ENCODE measurements at regions of chr1 and their contacts with region 1.

Region 1: DNA sequence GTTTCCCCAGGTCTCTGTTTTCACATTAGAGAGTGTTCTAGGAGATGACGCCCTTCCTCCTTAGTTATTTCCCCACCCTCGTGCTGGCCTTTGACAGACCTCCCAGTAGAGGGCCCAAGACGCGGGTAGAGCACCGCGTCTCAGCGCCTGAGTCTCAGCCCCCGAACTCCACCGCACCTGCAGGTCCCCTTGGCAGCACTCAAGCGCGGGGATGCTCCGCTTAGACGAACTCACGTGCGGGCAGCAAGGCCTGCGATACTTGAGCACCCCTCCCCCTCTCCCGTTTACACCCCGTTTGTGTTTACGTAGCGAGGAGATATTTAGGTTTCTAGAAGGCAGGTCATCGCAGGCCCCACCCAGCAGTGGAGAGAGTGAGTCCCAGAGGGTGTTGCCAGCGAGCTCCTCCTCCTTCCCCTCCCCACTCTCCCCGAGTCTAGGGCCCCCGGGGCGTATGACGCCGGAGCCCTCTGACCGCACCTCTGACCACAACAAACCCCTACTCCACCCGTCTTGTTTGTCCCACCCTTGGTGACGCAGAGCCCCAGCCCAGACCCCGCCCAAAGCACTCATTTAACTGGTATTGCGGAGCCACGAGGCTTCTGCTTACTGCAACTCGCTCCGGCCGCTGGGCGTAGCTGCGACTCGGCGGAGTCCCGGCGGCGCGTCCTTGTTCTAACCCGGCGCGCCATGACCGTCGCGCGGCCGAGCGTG is at the start of gene CD55:
- DNase-seq: peak; percentile 100
- ATAC-seq: peak; percentile 86
- H3K4me3 ChIP-seq: peak within 1 kb of the TSS; percentile 77
- H3K27ac ChIP-seq: peak within 1 kb of the TSS; percentile 88
- H3K4me1 ChIP-seq: peaks cover 41% of the 10 kb centered on the region
- H3K27me3 ChIP-seq: no peaks in the 10 kb centered on the region
- CTCF ChIP-seq: peak; percentile 72
- total RNA-seq, gene CD55: 101 and 108 TPM in 2 replicates

Region 2: DNA sequence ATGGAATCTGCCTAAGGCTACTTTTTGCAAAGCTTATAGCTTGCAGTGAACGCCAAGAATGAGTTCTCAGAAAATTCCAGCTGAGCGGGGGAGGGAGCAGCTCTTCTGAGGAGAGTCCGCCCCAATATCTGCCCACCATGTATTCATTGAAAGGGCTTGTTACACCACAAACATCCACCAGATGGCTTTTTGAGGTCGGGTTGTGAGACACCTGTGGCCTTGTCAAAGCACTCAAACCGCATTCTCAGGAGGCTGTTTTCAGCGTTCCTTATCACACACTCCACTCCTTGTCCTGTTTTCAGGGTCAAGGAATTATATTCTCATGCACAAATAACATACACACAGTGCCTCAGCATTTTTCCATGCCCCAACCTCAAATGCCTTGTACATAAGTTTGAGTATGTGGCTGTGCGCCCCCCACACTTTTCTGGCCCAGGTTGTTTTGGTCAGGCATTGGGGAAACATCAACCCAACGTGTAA is 236.5 kb before region 1 on chr1:
- CTCF ChIA-PET with region 1: interaction called, 5 read pairs
- POLR2A ChIA-PET with region 1: interaction called, 3 read pairs
- intact Hi-C with region 1: loop called (anchors 2 kb)
- DNase-seq: peak; percentile 95
- ATAC-seq: peak; percentile 89
- H3K4me3 ChIP-seq: no peak overlapping the region
- H3K27ac ChIP-seq: no peak overlapping the region
- H3K4me1 ChIP-seq: peaks cover 13% of the 10 kb centered on the region
- H3K27me3 ChIP-seq: no peaks in the 10 kb centered on the region
- CTCF ChIP-seq: peak; percentile 94

Region 3: DNA sequence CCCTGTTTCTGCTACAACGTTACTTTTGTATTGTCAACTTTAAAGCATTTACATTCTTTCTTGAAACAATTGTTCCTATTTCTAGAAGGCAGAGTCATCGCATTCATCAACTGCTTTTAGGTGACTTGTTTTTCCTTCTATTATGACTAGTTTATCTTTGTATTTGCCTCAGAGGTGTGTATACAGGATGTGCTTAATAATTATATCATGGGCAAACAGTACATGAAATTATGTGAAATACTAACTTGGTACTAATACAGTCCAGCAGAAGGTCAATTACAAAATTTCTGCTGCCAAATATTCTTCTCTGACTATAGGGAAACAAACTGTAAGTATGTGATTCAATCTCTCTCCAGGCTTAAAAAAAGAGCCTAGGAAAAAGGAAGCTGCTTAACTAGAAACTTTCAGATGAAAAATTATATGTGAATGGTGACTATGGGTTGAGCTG is 115.6 kb before region 1 on chr1:
- CTCF ChIA-PET with region 1: no interaction called
- POLR2A ChIA-PET with region 1: interaction called, 5 read pairs
- intact Hi-C with region 1: loop called (anchors 1 kb)
- DNase-seq: peak; percentile 31
- ATAC-seq: peak; percentile 30
- H3K4me3 ChIP-seq: no peak overlapping the region
- H3K27ac ChIP-seq: peak overlapping the region; percentile 74
- H3K4me1 ChIP-seq: peaks cover 14% of the 10 kb centered on the region
- H3K27me3 ChIP-seq: no peaks in the 10 kb centered on the region
- CTCF ChIP-seq: no peak

Region 4: GRCh38 chr1:207282058-207282457 is 39.2 kb before region 1 on chr1:
- CTCF ChIA-PET with region 1: no interaction called
- POLR2A ChIA-PET with region 1: interaction called, 4 read pairs
- intact Hi-C with region 1: loop called (anchors 1 kb)
- DNase-seq: peak; percentile 85
- ATAC-seq: peak; percentile 86
- H3K4me3 ChIP-seq: no peak overlapping the region
- H3K27ac ChIP-seq: peak overlapping the region; percentile 68
- H3K4me1 ChIP-seq: peaks cover 21% of the 10 kb centered on the region
- H3K27me3 ChIP-seq: no peaks in the 10 kb centered on the region
- CTCF ChIP-seq: no peak

Region 5: DNA sequence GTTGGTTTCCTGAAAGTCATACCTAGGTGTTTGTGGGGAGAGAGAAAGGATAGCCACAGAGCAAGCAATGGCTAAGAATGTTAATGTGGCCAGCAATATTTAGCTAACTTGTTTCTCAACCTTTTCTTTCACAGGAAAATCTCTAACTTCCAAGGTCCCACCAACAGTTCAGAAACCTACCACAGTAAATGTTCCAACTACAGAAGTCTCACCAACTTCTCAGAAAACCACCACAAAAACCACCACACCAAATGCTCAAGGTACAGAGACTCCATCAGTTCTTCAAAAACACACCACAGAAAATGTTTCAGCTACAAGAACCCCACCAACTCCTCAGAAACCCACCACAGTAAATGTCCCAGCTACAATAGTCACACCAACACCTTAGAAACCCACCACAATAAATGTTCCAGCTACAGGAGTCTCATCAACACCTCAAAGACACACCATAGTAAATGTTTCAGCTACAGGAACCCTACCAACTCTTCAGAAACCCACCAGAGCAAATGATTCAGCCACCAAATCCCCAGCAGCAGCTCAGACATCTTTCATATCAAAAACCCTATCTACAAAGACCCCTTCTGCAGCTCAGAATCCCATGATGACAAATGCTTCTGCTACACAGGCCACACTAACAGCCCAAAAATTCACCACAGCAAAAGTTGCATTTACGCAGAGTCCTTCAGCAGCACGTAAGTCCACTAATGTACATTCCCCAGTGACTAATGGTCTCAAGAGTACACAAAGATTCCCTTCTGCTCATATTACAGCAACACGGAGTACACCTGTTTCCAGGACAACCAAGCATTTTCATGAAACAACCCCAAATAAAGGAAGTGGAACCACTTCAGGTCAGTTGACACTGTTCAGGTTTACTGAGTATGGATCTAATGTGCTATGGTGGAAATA is 15.6 kb after region 1 on chr1:
- CTCF ChIA-PET with region 1: interaction called, 3 read pairs
- POLR2A ChIA-PET with region 1: interaction called, 11 read pairs
- intact Hi-C with region 1: no loop called
- DNase-seq: peak; percentile 97
- ATAC-seq: peak; percentile 98
- H3K4me3 ChIP-seq: no peak overlapping the region
- H3K27ac ChIP-seq: peak overlapping the region; percentile 74
- H3K4me1 ChIP-seq: peaks cover 21% of the 10 kb centered on the region
- H3K27me3 ChIP-seq: no peaks in the 10 kb centered on the region
- CTCF ChIP-seq: no peak

Region 6: DNA sequence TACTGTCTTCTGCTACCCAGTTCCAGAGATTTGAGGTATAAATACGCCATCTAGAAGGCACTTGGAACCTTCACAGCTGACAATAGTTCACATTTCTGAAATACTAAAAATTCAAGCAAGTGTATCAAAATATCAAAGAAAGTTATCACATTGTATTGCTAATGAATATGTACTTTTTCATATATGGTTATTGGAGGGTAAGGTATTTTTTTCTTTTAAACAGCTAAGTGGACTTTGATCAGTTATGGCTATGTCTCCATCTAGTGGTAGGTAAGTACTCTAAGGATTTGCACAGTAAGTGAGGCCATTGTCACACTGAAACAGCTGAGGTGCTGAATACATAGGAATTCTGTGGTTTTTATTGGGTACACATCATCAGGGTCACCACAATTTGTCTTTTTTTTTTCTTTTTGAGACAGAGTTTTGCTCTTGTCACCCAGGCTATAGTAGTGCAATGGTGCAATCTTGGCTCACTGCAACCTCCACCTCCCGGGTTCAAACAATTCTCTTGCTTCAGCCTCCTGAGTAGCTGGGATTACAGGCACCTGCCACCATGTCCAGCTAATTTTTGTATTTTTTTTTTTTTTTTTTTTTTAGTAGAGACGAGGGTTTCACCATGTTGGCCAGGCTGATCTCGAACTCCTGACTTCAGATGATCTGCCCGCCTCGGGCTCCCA is 83.8 kb after region 1 on chr1:
- CTCF ChIA-PET with region 1: interaction called, 20 read pairs
- POLR2A ChIA-PET with region 1: interaction called, 9 read pairs
- intact Hi-C with region 1: loop called (anchors 1 kb)
- DNase-seq: peak; percentile 93
- ATAC-seq: peak; percentile 97
- H3K4me3 ChIP-seq: no peak overlapping the region
- H3K27ac ChIP-seq: no peak overlapping the region
- H3K4me1 ChIP-seq: no peaks in the 10 kb centered on the region
- H3K27me3 ChIP-seq: peaks cover 25% of the 10 kb centered on the region
- CTCF ChIP-seq: peak; percentile 98